AG04449 (cell line): ENCODE measurements at regions of chr17 and their contacts with region 1.

Region 1: GRCh38 chr17:59837308-59838051 is 55.3 kb downstream of the TUBD1 start:
- DNase-seq: peak; percentile 100
- H3K4me3 ChIP-seq: peak overlapping the region; percentile 78
- CTCF ChIP-seq: no peak

Region 2: GRCh38 chr17:59753522-59754467 is 83.7 kb before region 1 on chr17:
- CTCF ChIA-PET with region 1: interaction called, 48 read pairs
- POLR2A ChIA-PET with region 1: interaction called, 449 read pairs
- DNase-seq: peak; percentile 65
- H3K4me3 ChIP-seq: peak overlapping the region; percentile 3; the same call in 1 of the 2 replicates
- CTCF ChIP-seq: peak; percentile 40

Region 3: DNA sequence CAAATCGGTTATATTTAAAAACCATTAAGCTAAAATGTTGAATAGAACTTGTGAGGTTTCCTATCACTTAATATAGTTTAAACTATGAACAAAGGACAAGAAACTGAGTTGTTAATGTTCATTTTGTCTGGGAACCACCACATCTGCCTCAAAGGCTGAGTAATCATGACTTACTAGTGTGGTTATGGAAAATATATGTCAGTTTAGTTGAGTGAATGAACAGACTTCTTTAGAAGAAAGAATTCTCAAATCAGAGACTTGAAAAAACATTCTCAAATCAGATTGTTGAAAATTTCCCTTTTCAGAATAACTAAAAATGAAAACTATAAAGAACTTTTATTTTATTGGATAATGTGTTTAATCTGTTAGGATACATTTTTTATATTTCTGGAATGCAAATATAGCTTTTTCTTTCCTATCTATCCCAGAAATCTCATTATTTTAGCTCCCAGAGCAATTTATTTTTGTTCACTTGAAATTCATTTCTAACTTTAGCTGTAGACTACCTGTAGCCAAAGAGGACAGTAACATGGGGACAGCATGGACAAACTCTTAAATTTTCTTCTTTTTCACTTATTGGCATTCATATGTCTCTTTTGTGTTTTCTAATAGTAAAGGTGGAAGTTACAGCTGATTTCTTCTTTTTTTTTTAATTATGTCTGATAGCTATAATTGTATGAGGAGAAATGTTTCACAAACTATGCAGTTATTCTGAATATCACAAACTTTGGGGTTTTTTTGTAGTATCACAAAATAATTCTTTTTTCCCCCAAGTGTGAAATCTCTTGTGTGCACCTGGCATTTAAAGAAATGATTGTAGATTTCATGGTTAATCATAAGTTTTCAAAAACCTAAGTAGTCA is 74.7 kb before region 1 on chr17:
- CTCF ChIA-PET with region 1: interaction called, 4 read pairs
- POLR2A ChIA-PET with region 1: interaction called, 222 read pairs
- DNase-seq: no peak
- H3K4me3 ChIP-seq: no peak overlapping the region
- CTCF ChIP-seq: no peak

Region 4: DNA sequence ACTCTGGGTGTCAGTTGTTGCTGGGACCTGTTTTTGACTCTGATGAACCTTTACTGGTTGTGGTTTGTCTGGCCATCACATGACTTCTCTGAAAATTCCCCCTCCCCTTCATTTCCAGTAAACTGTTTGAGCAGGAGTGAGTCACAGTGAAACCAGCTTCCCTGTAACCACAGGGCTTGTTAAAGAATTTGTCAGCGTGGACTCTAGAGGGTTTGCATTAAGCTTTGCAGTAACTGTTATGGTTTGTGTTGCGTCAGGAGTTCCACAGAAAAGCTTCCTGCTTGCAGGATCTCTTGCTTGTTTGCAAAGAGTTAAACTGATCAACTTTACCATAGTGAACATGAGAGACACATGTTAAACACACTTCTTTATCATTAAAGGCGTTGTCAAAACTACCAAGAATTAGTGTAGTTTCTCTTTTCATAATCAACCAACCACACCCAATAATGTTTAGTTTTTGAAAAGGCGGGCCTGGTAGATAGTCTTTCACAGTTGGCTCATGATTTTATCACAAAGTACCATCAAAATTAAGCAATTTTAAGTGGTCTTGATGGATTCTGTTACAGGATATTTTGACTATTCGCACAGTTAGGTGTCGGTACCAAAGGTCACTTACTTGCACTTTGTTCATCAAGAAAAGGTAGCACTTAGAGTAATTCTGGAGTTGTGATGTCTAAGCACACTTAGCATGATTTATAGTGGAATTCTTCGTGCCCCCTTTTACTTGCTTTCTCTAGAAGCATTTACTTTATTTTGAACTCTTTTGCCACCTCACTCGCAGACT is 50.8 kb before region 1 on chr17:
- CTCF ChIA-PET with region 1: interaction called, 8 read pairs
- POLR2A ChIA-PET with region 1: interaction called, 58 read pairs
- DNase-seq: peak; percentile 100
- H3K4me3 ChIP-seq: no peak overlapping the region
- CTCF ChIP-seq: no peak

Region 5: GRCh38 chr17:59791603-59792457 is 45.6 kb before region 1 on chr17:
- CTCF ChIA-PET with region 1: no interaction called
- POLR2A ChIA-PET with region 1: interaction called, 58 read pairs
- DNase-seq: peak; percentile 67
- H3K4me3 ChIP-seq: no peak overlapping the region
- CTCF ChIP-seq: no peak

Region 6: DNA sequence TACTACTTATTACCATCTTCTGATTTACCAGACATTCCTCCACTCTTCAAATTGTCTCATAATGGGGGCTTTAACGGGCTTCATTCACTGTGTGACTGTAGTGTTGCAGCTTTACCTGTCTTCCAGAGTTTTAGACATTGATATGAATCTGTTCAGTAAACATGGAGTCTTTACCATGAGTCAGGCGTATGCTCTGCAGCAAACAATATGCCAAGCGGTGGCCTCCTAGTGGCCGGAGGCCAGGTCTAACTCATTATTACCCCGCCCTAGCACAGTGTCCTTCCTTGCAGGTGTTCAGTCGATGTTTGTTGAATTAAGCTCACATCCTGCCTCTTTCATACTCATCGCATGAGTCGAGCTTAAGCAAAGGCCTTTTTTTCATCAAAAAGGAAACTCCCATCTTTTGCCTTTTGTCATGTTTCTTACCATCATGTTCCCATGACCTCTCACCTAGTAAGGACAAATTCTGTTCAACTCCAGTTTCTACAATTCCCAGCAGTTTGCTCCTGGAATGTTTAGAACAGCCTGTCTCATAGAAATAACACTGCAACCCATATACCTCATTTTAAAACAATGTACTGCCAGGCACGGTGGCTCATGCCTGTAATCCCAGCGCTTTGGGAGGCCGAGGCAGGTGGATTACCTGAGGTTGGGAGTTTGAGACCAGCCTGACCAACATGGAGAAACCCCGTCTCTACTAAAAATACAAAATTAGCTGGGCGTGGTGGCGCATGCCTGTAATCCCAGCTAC is 15.9 kb after region 1 on chr17:
- CTCF ChIA-PET with region 1: no interaction called
- POLR2A ChIA-PET with region 1: interaction called, 13 read pairs
- DNase-seq: peak; percentile 87
- H3K4me3 ChIP-seq: no peak overlapping the region
- CTCF ChIP-seq: peak; percentile 17

Region 7: DNA sequence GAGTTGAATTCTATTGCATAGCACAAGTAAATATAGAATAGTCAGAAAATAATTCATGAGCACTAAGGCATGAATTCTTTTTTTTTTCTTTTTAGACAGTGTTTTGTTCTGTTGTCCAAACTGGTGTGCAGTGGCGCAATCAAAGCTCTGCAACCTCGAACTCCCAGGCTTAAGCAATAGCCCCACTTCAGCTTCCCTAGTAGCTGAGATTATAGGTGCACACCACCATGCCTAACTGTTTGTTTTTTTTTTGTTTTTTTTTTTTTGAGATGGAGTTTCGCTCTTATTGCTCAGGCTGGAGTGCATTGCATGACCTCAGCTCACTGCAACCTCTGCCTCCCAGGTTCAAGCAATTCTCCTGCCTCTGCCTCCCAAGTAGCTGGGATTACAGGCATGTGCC is 38.6 kb after region 1 on chr17:
- CTCF ChIA-PET with region 1: no interaction called
- POLR2A ChIA-PET with region 1: no interaction called
- DNase-seq: no peak
- H3K4me3 ChIP-seq: no peak overlapping the region
- CTCF ChIP-seq: no peak